ENCODE measurements at regions of chr5 and their contacts with region 1.

Region 1: DNA sequence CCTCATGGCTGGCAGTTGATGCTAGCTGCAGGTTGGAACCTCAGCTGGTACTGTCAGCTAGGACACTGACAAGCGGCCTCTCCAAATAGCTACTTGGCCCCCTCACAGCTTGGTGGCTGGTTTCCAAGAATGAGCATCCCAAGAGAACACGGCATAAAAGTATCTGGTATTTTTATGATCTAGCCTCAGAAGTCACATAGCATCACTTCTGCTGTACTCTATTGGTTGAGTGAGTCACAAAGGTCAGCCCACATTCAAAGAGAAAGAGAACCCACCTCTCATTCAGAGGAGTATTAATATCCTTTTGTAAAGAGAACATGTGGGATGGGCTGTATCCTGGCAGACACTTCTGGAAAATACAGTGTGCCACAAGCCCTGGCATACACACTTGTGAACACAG is 6.0 kb upstream of the SIL1 start:
- DNase-seq: no peak
- ATAC-seq: no peak
- H3K4me3 ChIP-seq: no peak overlapping the region
- H3K27ac ChIP-seq: no peak overlapping the region
- H3K4me1 ChIP-seq: no peaks in the 10 kb centered on the region
- H3K27me3 ChIP-seq: no peaks in the 10 kb centered on the region
- CTCF ChIP-seq: no peak
- POLR2A ChIP-seq: no peak
- RAD21 ChIP-seq: no peak

Region 2: GRCh38 chr5:139147483-139148087 is 56.6 kb before region 1 on chr5:
- CTCF ChIA-PET with region 1: no interaction called
- POLR2A ChIA-PET with region 1: no interaction called
- RAD21 ChIA-PET with region 1: no interaction called
- intact Hi-C with region 1: loop called (anchors 10 kb)
- DNase-seq: no peak
- ATAC-seq: no peak
- H3K4me3 ChIP-seq: no peak overlapping the region
- H3K27ac ChIP-seq: no peak overlapping the region
- H3K4me1 ChIP-seq: peaks cover 3 to 6% of the 10 kb centered on the region in 2 experiments; a peak in 3 of 4 replicates
- H3K27me3 ChIP-seq: no peaks in the 10 kb centered on the region
- CTCF ChIP-seq: no peak
- POLR2A ChIP-seq: no peak
- RAD21 ChIP-seq: no peak